HEK293T (cell line): ENCODE measurements at regions of chr1 and their contacts with region 1.

Region 1: DNA sequence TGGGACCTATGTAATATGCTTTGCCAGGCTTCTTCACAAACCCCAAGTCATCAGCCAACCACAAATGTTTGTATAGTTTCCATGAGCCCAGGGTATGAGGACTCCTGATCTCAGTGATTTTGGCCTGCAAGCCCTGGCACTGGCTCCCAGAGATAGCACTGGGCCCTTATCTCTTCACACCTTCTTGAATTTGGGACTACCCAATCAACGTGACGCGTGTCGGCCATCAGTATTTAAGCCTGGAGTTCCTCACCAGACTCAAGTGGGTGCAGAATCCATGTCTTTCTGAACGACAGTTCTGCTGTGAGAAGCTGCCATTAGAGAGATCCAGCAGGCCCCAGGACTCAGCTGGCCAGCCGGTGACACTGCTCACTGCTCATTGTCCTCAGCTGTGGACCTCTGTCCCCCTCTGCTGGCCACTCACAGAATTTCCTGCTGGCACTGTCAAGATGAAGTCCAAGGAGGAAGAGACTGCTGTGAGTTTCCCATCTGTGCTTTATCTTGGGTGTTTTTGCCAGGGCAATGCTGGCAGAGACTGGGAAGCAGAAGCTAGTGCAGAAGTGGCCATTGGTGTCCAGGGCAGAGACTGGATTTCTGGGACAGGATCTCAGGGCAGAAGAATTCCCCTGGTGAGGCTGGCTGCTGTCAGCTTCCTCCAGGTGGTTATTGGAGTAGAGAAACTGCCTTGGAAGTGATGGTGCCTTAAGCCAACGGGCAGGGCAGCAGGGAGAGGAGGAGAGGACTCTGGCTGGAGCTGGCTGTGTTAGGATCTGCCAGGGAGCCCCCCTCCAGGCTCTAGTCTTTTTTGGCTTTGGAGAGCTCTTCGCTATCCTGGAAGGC is 28.4 kb downstream of the TMCC2 start:
- DNase-seq: peak; percentile 90

Region 2: GRCh38 chr1:204989266-204990058 is 266.7 kb before region 1 on chr1:
- CTCF ChIA-PET with region 1: interaction called, 17 read pairs
- POLR2A ChIA-PET with region 1: no interaction called
- DNase-seq: peak; percentile 95